AG04449 (cell line): ENCODE measurements at regions of chr15 and their contacts with region 1.

Region 1: GRCh38 chr15:35751413-35752133 is 205.6 kb upstream of the DPH6 start:
- DNase-seq: no peak
- H3K4me3 ChIP-seq: no peak overlapping the region; the same call in 1 of the 2 replicates
- CTCF ChIP-seq: peak; percentile 64

Region 2: GRCh38 chr15:35458176-35458856 is 293.3 kb before region 1 on chr15:
- CTCF ChIA-PET with region 1: no interaction called
- POLR2A ChIA-PET with region 1: no interaction called
- DNase-seq: no peak
- H3K4me3 ChIP-seq: no peak overlapping the region
- CTCF ChIP-seq: no peak

Region 3: GRCh38 chr15:35519541-35520149 is 231.9 kb before region 1 on chr15:
- CTCF ChIA-PET with region 1: interaction called, 13 read pairs
- POLR2A ChIA-PET with region 1: no interaction called
- DNase-seq: peak; percentile 4
- H3K4me3 ChIP-seq: no peak overlapping the region
- CTCF ChIP-seq: peak; percentile 41

Region 4: DNA sequence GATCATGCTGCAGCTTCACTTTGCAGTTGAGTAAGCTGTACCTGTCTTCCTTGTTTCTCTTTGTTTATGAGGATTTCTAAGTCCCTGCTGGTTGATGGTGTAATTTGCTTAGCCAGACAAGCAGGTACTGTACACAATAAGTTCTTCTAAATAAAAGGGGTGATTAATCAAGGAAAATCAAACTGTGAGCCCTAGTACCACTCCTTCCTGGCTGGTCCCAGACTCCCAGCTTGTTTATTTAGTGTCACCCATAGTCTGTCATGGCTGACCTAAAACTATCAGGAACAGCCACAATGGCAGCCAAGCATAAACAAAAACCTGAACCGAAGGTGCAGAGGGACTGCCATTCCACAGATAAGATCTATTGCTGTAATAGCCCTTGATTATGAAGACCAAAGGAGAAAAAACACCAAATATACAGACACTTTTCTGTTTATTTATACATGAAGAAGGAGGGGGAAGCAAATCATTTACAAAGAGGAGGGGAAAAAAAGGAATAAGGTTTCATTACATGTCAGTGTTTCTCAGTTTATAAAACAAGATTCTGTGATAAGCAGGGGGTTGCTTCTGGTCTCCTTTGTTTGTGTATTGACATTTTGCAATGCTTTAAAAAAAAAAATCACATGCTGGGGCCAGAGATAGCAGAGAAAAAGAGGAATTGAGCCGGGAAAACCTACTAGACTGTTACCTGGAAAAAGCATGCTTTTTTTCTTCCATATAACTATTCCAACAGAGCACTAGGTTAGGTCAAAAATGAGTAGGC is 23.2 kb before region 1 on chr15:
- CTCF ChIA-PET with region 1: interaction called, 10 read pairs
- POLR2A ChIA-PET with region 1: no interaction called
- DNase-seq: no peak
- H3K4me3 ChIP-seq: no peak overlapping the region
- CTCF ChIP-seq: no peak

Region 5: DNA sequence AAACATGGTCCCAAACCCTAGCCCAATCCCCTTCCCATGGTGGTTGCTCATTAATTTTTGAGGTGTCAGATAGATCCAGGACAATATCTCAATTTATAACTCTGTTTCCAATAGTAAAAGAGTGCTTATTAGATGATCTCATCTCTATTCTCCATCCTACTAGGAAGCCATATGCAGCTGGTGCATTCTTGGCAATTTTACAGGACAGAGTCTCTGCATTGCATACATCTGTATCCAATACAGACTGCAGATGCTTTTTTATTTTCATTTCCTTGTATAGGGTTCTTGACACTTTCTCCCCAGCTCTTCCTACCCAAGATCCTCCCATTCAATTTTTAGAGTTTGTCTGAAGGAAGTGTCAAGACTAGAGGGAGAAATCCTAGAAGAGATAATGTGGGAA is 10.8 kb before region 1 on chr15:
- CTCF ChIA-PET with region 1: interaction called, 52 read pairs
- POLR2A ChIA-PET with region 1: no interaction called
- DNase-seq: peak; percentile 67
- H3K4me3 ChIP-seq: no peak overlapping the region
- CTCF ChIP-seq: no peak

Region 6: DNA sequence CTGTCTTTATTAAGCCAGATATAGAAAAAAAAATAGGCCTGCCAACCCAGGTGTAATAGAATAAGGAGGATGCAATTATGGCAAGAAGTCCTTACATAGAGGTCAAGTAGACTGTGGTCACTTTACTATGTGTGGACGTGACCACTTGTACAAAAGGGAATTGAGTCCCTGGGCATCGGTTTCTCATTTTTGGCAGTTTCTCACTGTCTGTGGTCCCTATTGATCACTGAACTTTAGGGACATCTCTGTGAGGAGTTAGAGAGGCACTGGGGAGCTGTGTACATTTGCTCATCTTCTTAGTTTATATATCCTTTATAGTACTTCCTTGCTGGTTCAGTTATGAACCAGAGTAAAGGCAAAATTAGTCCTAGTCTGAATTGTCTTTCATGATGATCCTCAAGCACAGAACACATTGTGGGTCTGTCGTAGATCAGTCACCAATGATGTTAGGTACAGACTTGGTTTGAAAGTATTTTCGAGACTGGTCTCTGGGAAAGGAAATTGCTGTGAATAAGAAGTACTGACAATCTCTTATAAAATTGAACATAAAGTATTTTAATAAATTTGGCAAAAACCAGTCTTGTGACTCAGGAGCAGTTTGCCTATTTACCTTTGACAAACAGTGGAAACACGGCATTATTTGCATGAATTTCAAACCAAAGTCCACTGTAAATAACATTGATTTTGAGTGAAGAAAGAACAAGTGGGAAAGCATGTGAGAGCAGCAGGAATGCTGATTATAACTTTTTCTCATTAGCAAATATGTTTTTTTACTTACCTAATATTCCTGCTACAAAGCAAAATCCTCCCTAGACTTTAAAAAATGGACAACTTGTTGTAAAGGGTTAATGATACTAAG is 13.3 kb after region 1 on chr15:
- CTCF ChIA-PET with region 1: interaction called, 51 read pairs
- POLR2A ChIA-PET with region 1: no interaction called
- DNase-seq: no peak
- H3K4me3 ChIP-seq: no peak overlapping the region
- CTCF ChIP-seq: no peak

Region 7: DNA sequence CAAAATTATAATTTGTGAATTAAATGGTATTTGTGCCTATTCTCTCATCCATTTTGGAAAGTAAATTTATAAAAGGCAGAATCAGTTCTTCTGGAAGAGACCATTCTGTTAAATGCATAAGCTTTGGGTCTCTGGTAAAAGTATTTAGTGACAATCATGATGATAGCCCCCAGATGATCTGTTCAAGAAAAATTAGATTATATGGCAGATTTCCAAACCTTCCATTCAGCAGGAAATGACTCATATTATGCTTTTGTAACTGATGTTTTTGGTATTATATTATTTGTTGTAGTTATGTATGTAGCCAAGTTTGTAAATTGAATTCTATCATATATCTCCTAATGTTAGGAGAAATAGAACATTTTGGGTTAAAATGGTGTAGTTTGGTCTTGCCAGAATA is 135.2 kb after region 1 on chr15:
- CTCF ChIA-PET with region 1: no interaction called
- POLR2A ChIA-PET with region 1: no interaction called
- DNase-seq: no peak
- H3K4me3 ChIP-seq: no peak overlapping the region
- CTCF ChIP-seq: no peak

Region 8: GRCh38 chr15:36208868-36209582 is 457.5 kb after region 1 on chr15:
- CTCF ChIA-PET with region 1: interaction called, 11 read pairs
- POLR2A ChIA-PET with region 1: no interaction called
- DNase-seq: no peak
- H3K4me3 ChIP-seq: no peak overlapping the region
- CTCF ChIP-seq: no peak

Region 9: DNA sequence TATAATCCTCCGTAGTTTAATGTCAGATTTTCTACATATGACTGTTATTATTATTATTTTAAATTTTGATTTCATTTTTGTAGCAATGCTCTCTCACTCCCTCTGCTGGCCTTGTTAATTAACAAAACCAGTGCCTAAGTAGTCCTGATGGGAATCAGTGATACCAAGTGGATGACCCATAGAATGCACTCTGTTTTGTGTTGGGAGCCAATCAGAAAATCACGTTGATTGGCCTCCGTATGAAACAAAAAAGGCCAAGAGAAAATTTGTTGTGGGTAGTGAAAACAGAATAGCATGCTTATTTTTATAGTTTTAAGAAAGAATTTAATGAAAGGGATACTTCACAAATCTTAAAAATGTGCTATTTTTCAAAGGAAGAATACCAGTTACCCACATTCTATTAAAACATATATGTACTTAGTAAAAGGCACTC is 1383.1 kb after region 1 on chr15:
- CTCF ChIA-PET with region 1: interaction called, 10 read pairs
- POLR2A ChIA-PET with region 1: no interaction called
- DNase-seq: no peak
- H3K4me3 ChIP-seq: no peak overlapping the region
- CTCF ChIP-seq: peak; percentile 37